Natural killer cell (primary cell): ENCODE measurements at regions of chr11 and their contacts with region 1.

Region 1: DNA sequence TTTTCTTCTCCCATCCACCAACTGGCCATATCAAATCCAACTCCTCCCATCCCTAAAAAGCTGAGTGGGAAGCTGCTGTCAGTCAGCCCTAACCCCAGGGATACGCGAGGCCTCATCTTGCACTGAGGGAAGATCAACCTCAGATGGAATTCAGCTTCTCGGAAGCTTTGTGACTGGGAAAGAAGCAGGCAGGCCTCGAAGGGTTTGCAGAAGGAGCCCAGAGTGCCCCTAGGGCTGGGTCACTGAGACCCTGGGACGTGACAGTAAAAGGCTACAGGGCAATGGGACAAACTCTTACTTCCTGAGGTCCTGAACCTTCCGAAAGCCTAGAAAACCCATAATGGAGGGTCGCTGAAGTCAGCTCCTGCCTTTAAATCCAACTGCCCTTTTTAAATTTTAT is 34.4 kb upstream of the NNMT start:
- DNase-seq: no peak
- ATAC-seq: no peak
- H3K4me3 ChIP-seq: no peak overlapping the region
- H3K4me3 Mint-ChIP-seq: no peak overlapping the region
- H3K27ac ChIP-seq: no peak overlapping the region
- H3K27ac Mint-ChIP-seq: no peak overlapping the region
- H3K4me1 ChIP-seq: peaks cover 31% of the 10 kb centered on the region
- H3K4me1 Mint-ChIP-seq: peaks cover 8 to 16% of the 10 kb centered on the region in 2 donors
- H3K27me3 ChIP-seq: no peaks in the 10 kb centered on the region
- H3K27me3 Mint-ChIP-seq: no peaks in the 10 kb centered on the region
- CTCF ChIP-seq: no peak

Region 2: DNA sequence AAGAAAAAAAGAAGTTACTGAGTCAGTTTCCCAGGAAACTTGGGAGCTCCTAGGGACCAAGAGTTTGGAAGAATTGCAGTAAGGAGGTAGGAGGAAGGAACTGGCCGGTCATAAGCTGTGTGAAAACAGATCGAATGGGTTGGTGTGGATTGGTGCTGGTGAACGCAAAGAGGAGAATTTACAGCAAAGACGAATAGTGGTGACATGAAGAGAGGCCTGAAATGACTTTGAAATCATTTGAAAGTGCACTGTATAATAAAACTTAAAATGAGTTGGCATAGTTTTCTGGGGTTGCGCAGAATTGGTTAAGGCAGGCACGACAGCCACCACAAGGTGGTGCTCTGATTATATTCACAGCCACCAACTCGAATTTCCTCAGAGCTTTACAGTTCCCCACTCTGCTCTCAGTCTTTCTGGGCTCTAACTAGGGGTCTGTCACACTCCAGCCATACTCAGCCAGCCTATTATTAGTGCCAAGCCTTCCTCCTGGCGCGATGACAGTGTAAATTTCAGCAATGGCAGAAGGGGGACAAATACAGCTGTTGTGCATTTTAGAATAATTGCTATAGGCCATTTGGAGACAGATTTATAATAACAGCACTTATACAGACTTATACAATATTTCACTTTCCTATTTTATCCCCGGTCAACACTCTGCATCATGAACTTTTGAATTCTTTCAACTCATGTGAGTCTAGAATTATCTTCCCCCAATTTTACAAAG is 365.5 kb before region 1 on chr11:
- intact Hi-C with region 1: loop called (anchors 1 kb)
- DNase-seq: peak in 1 of 2 donors; percentile 69
- ATAC-seq: peak; percentile 73 to 80 (median 76)
- H3K4me3 ChIP-seq: no peak overlapping the region
- H3K4me3 Mint-ChIP-seq: no peak overlapping the region
- H3K27ac ChIP-seq: no peak overlapping the region
- H3K27ac Mint-ChIP-seq: no peak overlapping the region
- H3K4me1 ChIP-seq: no peaks in the 10 kb centered on the region
- H3K4me1 Mint-ChIP-seq: peaks cover 13 to 14% of the 10 kb centered on the region in 2 donors
- H3K27me3 ChIP-seq: no peaks in the 10 kb centered on the region
- H3K27me3 Mint-ChIP-seq: peaks cover 0 to 2% of the 10 kb centered on the region in 2 donors
- CTCF ChIP-seq: peak; percentile 69

Region 3: GRCh38 chr11:113994077-113994954 is 267.5 kb before region 1 on chr11:
- intact Hi-C with region 1: loop called (anchors 1 kb)
- DNase-seq: peak; percentile 32 to 65
- ATAC-seq: peak in 2 of 3 donors; percentile 61 to 70
- H3K4me3 ChIP-seq: no peak overlapping the region
- H3K4me3 Mint-ChIP-seq: no peak overlapping the region
- H3K27ac ChIP-seq: no peak overlapping the region
- H3K27ac Mint-ChIP-seq: no peak overlapping the region
- H3K4me1 ChIP-seq: no peaks in the 10 kb centered on the region
- H3K4me1 Mint-ChIP-seq: no peaks in the 10 kb centered on the region
- H3K27me3 ChIP-seq: no peaks in the 10 kb centered on the region
- H3K27me3 Mint-ChIP-seq: peaks cover 28 to 29% of the 10 kb centered on the region in 2 donors
- CTCF ChIP-seq: peak; percentile 67

Region 4: DNA sequence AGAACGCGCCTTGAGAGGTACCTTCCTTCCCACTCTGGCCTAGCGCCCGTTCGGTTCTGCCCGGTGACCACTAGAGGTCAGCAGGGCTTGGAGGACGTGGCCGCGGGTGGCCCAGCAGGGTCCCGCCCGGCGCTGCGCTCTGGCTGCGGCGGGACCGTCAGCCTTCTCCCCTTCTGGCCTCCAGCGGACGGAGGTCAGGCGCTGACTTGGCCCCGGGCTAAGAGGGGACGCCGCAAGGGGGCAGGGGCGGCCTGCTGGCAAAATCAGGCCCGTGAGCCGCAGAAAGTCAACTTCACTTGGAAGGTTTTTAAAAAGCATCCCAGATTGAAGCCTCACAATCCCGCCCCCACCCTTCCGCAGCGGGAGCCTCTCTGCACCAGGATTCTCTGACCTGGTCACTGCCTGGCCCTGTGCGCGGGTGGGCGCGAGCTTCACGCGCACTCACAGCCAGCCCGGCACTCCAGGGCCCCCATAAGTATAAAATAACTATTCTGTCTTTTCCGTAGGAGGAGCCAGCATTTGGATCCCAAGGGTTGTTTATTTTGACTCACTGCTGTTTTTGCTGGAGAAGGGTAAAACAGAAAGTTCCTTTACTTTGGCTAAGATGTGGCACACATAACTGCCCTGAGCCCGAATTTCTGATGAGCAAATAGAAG is 225.5 kb before region 1 on chr11:
- intact Hi-C with region 1: loop called (anchors 1 kb)
- DNase-seq: peak; percentile 61 to 72
- ATAC-seq: peak; percentile 81 to 95 (median 94)
- H3K4me3 ChIP-seq: no peak overlapping the region
- H3K4me3 Mint-ChIP-seq: peak overlapping the region; percentile 65
- H3K27ac ChIP-seq: no peak overlapping the region
- H3K27ac Mint-ChIP-seq: peak overlapping the region in 1 of 2 donors; percentile 33
- H3K4me1 ChIP-seq: peaks cover 11% of the 10 kb centered on the region
- H3K4me1 Mint-ChIP-seq: peaks cover 6 to 8% of the 10 kb centered on the region in 2 donors
- H3K27me3 ChIP-seq: no peaks in the 10 kb centered on the region
- H3K27me3 Mint-ChIP-seq: peaks cover 2 to 8% of the 10 kb centered on the region in 2 donors
- CTCF ChIP-seq: peak; percentile 79

Region 5: GRCh38 chr11:114059278-114059983 is 202.4 kb before region 1 on chr11 and contains the start of gene ZBTB16:
- intact Hi-C with region 1: loop called (anchors 1 kb)
- DNase-seq: peak; percentile 74 to 78
- ATAC-seq: peak; percentile 64 to 79 (median 77)
- H3K4me3 ChIP-seq: peak within 1 kb of the TSS; percentile 86
- H3K4me3 Mint-ChIP-seq: peak within 1 kb of the TSS; percentile 97
- H3K27ac ChIP-seq: peak within 1 kb of the TSS; percentile 90
- H3K27ac Mint-ChIP-seq: peak within 1 kb of the TSS; percentile 98 to 100
- H3K4me1 ChIP-seq: peaks cover 43% of the 10 kb centered on the region
- H3K4me1 Mint-ChIP-seq: peaks cover 32 to 49% of the 10 kb centered on the region in 2 donors
- H3K27me3 ChIP-seq: no peaks in the 10 kb centered on the region
- H3K27me3 Mint-ChIP-seq: no peaks in the 10 kb centered on the region
- CTCF ChIP-seq: no peak
- total RNA-seq, gene ZBTB16: 104 to 224 (median 156) TPM

Region 6: GRCh38 chr11:114197799-114198500 is 63.8 kb before region 1 on chr11:
- intact Hi-C with region 1: no loop called
- DNase-seq: no peak
- ATAC-seq: no peak
- H3K4me3 ChIP-seq: no peak overlapping the region
- H3K4me3 Mint-ChIP-seq: no peak overlapping the region
- H3K27ac ChIP-seq: peak overlapping the region; percentile 21
- H3K27ac Mint-ChIP-seq: peak overlapping the region; percentile 86 to 88
- H3K4me1 ChIP-seq: peaks cover 43% of the 10 kb centered on the region
- H3K4me1 Mint-ChIP-seq: peaks cover 56 to 66% of the 10 kb centered on the region in 2 donors
- H3K27me3 ChIP-seq: no peaks in the 10 kb centered on the region
- H3K27me3 Mint-ChIP-seq: no peaks in the 10 kb centered on the region
- CTCF ChIP-seq: no peak